PC-3 (cell line): ENCODE measurements at regions of chr13 and their contacts with region 1.

Region 1: GRCh38 chr13:68588623-68589022 is 1358.5 kb upstream of the PCDH9 start:
- DNase-seq: no peak
- ATAC-seq: no peak
- H3K4me3 ChIP-seq: no peak overlapping the region
- H3K27ac ChIP-seq: no peak overlapping the region
- H3K4me1 ChIP-seq: no peaks in the 10 kb centered on the region
- H3K27me3 ChIP-seq: no peaks in the 10 kb centered on the region
- CTCF ChIP-seq: no peak

Region 2: DNA sequence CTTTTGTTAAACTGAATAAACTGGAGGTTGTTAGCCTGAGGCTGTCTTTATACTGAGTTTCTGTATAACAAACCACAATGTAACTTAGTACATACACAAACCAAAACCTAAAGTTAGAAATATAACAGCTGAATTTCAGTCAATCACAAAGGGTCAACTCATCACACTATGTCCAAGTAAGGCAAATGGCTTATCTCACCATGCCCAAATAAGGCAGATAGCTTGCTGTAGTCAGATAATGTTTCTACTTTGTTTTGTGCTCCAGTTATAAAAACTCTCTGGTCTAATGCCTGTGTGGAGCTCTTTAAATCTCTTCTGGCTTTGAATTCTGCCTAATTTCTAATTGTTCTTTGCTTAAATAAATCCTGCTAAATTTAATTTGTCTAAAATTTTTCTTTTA is 195.7 kb after region 1 on chr13:
- CTCF ChIA-PET with region 1: no interaction called
- POLR2A ChIA-PET with region 1: no interaction called
- intact Hi-C with region 1: loop called (anchors 10 kb)
- DNase-seq: no peak
- ATAC-seq: no peak
- H3K4me3 ChIP-seq: no peak overlapping the region
- H3K27ac ChIP-seq: no peak overlapping the region
- H3K4me1 ChIP-seq: no peaks in the 10 kb centered on the region
- H3K27me3 ChIP-seq: no peaks in the 10 kb centered on the region
- CTCF ChIP-seq: no peak